ENCODE measurements at regions of chr4 and their contacts with region 1.

Region 1: DNA sequence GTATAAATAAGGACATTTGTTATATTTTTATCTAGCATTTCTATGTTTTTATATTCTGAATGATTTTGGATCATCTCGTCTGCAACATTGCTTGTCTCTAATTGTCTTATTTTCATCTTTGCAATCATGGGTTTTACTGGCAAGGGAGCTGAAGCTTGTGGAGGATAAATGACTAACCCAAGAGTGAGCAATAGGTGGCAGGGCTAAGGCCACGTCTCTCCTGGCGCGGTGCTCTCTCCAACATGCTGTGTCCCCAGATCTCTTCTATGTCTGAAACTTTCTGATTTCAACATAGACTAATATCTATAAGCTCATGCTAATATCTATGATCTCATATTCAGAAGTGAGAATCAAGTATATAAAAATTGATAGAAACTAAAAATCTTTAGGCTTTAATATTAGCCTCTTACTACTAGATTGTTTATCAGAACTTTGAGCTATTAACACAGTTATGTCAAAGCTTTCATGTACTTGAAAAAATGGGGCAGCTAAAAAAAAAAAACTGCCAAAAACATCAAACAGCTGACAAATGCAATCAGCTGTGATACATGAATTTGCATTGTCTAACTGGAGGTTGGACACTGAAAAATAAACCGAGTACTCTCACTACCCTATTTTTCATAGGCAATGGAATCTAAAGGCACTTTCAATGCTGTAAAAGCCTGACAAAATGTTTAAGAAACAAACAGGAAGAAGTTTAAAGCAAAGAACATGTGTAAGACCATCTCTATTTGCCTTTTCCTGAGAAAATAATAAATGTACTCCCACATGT is 169.2 kb downstream of the TMA16 start:
- DNase-seq: no peak
- H3K4me3 ChIP-seq: no peak overlapping the region
- H3K4me3 Mint-ChIP-seq: peak overlapping the region in 4 of 8 donors; percentile 10 to 45 (median 21)
- H3K27ac ChIP-seq: no peak overlapping the region
- H3K27ac Mint-ChIP-seq: peak overlapping the region in 4 of 7 donors; percentile 20 to 79 (median 44)
- H3K4me1 ChIP-seq: peaks cover 48% of the 10 kb centered on the region
- H3K4me1 Mint-ChIP-seq: peaks cover 38 to 53% (median 48%) of the 10 kb centered on the region in 4 donors
- H3K27me3 ChIP-seq: no peaks in the 10 kb centered on the region
- H3K27me3 Mint-ChIP-seq: no peaks in the 10 kb centered on the region

Region 2: GRCh38 chr4:163622379-163623035 is 41.1 kb before region 1 on chr4:
- CTCF ChIA-PET with region 1: no interaction called
- POLR2A ChIA-PET with region 1: no interaction called
- intact Hi-C with region 1: loop called (anchors 5 kb)
- DNase-seq: no peak
- H3K4me3 ChIP-seq: no peak overlapping the region
- H3K4me3 Mint-ChIP-seq: peak overlapping the region in 2 of 8 donors; percentile 11 to 31
- H3K27ac ChIP-seq: no peak overlapping the region
- H3K27ac Mint-ChIP-seq: no peak overlapping the region
- H3K4me1 ChIP-seq: peaks cover 32% of the 10 kb centered on the region
- H3K4me1 Mint-ChIP-seq: peaks cover 30 to 47% (median 34%) of the 10 kb centered on the region in 4 donors
- H3K27me3 ChIP-seq: no peaks in the 10 kb centered on the region
- H3K27me3 Mint-ChIP-seq: no peaks in the 10 kb centered on the region

Region 3: GRCh38 chr4:163651761-163652160 is 11.9 kb before region 1 on chr4:
- CTCF ChIA-PET with region 1: no interaction called
- POLR2A ChIA-PET with region 1: no interaction called
- intact Hi-C with region 1: no loop called
- DNase-seq: no peak
- H3K4me3 ChIP-seq: no peak overlapping the region
- H3K4me3 Mint-ChIP-seq: no peak overlapping the region
- H3K27ac ChIP-seq: no peak overlapping the region
- H3K27ac Mint-ChIP-seq: no peak overlapping the region
- H3K4me1 ChIP-seq: no peaks in the 10 kb centered on the region
- H3K4me1 Mint-ChIP-seq: no peaks in the 10 kb centered on the region
- H3K27me3 ChIP-seq: no peaks in the 10 kb centered on the region
- H3K27me3 Mint-ChIP-seq: no peaks in the 10 kb centered on the region